ENCODE measurements at regions of chr11 and their contacts with region 1.

Region 1: DNA sequence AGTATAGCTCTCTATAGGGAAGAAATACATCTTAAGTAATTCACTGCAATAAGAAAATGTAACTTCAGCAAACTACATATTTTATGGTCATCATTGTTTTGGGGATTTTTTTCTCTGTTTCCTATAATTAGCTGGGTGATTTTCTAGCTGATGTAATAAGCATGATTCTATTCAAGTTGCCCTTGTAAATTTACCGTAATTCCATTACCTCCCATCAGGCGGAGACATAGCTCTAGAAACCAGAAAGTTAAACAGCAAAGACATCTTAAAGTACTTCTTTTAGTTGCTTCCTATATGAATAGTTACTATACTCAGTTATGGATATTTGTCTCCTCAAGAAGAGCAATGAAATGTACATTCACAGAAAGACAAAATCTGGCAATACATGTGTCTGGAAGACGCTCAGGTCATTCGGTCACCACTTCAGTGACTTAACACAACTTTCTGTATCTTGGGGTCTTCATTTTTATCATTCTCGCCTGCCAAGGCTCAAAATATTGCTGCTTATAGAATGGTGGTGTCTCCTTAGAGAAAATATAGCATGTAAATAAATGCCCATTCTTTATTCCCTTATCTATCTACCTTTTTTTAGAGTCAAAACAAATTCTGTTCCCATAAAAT is 239.9 kb upstream of the ZC3H12C start:
- DNase-seq: peak in 1 of 2 experiments; percentile 66
- H3K4me3 ChIP-seq: no peak overlapping the region
- H3K4me3 Mint-ChIP-seq: no peak overlapping the region
- H3K27ac Mint-ChIP-seq: no peak overlapping the region
- H3K4me1 ChIP-seq: no peaks in the 10 kb centered on the region
- H3K4me1 Mint-ChIP-seq: no peaks in the 10 kb centered on the region
- H3K27me3 ChIP-seq: peaks cover 1% of the 10 kb centered on the region; the same call in 1 of the 2 replicates
- H3K27me3 Mint-ChIP-seq: peaks cover 5% of the 10 kb centered on the region
- CTCF ChIP-seq: peak; percentile 86 to 87

Region 2: GRCh38 chr11:109870297-109870696 is 17.0 kb after region 1 on chr11:
- CTCF ChIA-PET with region 1: no interaction called
- POLR2A ChIA-PET with region 1: no interaction called
- intact Hi-C with region 1: no loop called
- DNase-seq: no peak
- H3K4me3 ChIP-seq: no peak overlapping the region
- H3K4me3 Mint-ChIP-seq: no peak overlapping the region
- H3K27ac Mint-ChIP-seq: no peak overlapping the region
- H3K4me1 ChIP-seq: no peaks in the 10 kb centered on the region
- H3K4me1 Mint-ChIP-seq: no peaks in the 10 kb centered on the region
- H3K27me3 ChIP-seq: no peaks in the 10 kb centered on the region; the same call in 1 of the 2 replicates
- H3K27me3 Mint-ChIP-seq: peaks cover 20% of the 10 kb centered on the region
- CTCF ChIP-seq: no peak

Region 3: DNA sequence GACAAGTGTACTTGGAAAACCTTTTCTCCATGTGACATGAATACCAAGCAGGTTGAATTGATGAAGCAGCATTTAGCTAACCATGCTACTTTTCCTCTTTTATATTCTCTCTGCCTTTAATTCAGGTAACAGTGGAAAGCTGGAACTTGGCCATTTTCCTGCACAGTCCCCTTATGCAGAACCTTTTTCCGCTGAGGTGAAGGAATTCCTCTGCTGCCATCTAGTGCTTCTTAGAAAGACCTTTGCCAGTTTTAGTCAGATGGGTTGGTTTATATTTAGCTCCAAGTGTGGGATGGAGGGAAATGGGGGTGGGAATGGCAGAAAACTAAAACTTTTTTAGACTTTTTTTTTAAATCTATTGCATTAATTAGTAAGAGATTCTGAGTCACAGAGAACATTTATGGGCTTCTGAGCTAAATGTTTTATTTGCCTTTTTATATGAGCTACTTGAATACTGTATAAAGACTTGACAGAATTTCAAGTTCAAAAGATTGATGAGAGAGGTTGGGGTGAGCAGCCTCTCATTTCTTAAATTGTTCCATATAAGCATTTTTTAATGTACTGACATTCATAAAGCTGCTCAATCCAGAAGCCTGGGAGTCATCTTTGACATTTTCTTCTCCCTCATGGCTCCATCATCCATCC is 86.0 kb after region 1 on chr11:
- CTCF ChIA-PET with region 1: interaction called, 63 read pairs
- POLR2A ChIA-PET with region 1: no interaction called
- intact Hi-C with region 1: loop called (anchors 1 kb)
- DNase-seq: peak; percentile 59 to 64
- H3K4me3 ChIP-seq: no peak overlapping the region
- H3K4me3 Mint-ChIP-seq: no peak overlapping the region
- H3K27ac Mint-ChIP-seq: no peak overlapping the region
- H3K4me1 ChIP-seq: no peaks in the 10 kb centered on the region
- H3K4me1 Mint-ChIP-seq: no peaks in the 10 kb centered on the region
- H3K27me3 ChIP-seq: no peaks in the 10 kb centered on the region; the same call in 1 of the 2 replicates
- H3K27me3 Mint-ChIP-seq: peaks cover 22% of the 10 kb centered on the region
- CTCF ChIP-seq: peak; percentile 78 to 89

Region 4: DNA sequence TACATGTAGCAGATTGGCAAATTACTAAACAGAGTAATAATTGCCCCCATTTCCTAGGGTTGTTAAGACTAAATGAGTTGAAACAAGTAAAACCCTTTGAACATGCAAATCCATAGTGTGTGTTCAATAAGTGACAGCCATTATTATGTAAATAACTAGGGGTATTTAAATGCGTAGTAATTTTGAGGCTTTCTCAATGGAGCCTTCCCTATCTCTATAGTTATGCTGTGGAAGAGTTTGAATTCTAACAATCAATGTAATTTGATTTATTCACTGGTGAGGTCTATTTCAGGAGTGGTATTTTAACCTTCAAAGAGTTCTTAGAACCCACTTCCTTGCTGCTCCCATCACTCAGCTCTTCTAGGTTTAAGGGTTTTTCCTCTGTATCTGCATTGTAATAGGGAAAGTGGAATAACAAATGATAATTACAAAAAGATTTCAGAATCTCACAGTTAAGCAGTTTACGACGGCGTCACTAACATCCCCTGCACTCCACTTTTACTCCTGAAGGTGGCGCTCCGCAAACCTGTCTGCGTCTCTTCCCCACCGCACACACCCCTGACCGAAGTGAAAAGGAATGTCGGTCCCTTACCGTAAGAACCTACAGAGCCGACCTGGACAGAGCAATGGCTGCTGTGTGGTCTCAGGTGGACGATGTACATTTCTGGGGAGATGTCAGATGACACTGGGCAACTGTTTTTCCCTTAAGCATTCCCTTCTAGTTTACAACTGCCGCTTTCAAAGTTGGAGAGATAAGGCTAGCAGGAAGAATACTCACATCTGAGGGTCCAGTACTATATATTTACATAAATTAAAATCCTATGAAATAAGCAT is 320.8 kb after region 1 on chr11:
- CTCF ChIA-PET with region 1: no interaction called
- POLR2A ChIA-PET with region 1: no interaction called
- intact Hi-C with region 1: loop called (anchors 5 kb)
- DNase-seq: peak; percentile 70
- H3K4me3 ChIP-seq: no peak overlapping the region
- H3K4me3 Mint-ChIP-seq: no peak overlapping the region
- H3K27ac Mint-ChIP-seq: no peak overlapping the region
- H3K4me1 ChIP-seq: no peaks in the 10 kb centered on the region
- H3K4me1 Mint-ChIP-seq: no peaks in the 10 kb centered on the region
- H3K27me3 ChIP-seq: no peaks in the 10 kb centered on the region
- H3K27me3 Mint-ChIP-seq: no peaks in the 10 kb centered on the region
- CTCF ChIP-seq: peak; percentile 79

Measured in Caco-2 (cell line).